ENCODE measurements at regions of chr15 and their contacts with region 1.

Region 1: DNA sequence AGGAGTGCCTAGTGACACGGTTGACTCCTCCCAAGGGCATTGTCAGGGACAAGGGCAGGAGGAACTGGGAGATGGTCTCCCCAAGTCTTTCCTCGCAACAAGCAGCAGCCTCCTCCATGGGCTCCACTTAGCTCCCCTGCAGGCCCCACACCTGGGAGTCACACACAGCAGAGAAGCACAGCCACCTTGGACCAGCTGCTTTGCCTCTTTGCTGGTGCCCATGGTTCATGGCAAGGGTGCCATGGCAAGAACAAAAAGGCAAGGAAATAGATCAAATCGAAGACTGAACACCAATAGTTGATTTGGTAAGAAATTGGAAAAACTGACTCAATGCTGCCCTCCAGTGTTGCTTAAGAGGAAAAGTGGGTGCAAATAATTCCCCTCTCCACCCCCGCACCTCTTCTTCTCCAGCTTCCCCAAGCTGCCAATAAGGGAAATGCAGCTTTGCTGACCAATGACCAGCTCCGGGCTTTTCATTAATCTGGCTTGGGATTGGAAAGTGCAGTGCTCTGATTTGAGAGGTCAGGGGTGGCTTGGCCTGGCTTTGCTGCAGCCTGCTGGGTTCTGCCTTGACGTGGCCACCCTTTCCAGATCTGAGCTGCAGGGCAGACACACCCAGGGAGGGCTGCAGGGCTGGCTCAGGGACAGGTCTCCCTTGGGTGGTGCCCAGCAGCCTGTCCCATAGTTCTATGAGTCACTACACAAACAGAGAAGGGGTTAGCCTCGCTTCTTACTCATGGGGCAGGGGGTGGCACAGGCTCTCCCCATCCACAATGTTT is 162.0 kb downstream of the KLF13 start:
- DNase-seq: peak in 1 of 2 donors; percentile 76
- ATAC-seq: peak; percentile 91
- H3K4me3 ChIP-seq: no peak overlapping the region
- H3K27ac ChIP-seq: peak overlapping the region; percentile 17 to 29
- H3K4me1 ChIP-seq: peaks cover 0 to 5% of the 10 kb centered on the region in 2 donors
- H3K27me3 ChIP-seq: no peaks in the 10 kb centered on the region

Region 2: GRCh38 chr15:30991255-30992072 is 497.2 kb before region 1 on chr15 and contains the start of gene MTMR10:
- intact Hi-C with region 1: loop called in 1 of 2 experiments (anchors 10 kb)
- DNase-seq: peak; percentile 83
- ATAC-seq: peak; percentile 97
- H3K4me3 ChIP-seq: peak within 1 kb of the TSS; percentile 86 to 90
- H3K27ac ChIP-seq: peak within 1 kb of the TSS; percentile 45 to 86
- H3K4me1 ChIP-seq: no peaks in the 10 kb centered on the region
- H3K27me3 ChIP-seq: no peaks in the 10 kb centered on the region
- total RNA-seq, gene MTMR10: 12.5 to 35.0 TPM

Region 3: DNA sequence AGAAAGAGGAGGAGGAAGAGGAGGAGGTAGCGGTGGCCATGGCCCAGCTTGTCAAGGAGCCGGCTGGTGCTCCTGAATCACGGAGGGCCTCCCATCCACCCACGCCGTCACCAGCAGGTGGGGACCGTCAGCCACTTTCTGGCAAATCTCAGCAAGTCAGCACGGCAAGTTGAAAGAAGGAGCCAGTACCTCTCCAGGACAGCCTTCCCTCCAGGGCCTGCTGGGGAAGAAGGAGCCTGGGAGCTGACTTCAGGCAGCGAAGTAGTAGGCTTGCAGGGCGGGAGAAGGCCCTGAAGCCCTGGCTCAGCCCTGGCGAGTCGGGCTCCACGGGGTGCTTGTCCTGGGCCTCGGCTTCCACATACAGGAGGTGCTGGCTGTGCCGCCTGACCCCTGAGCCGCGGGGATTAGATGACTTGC is 287.9 kb before region 1 on chr15:
- intact Hi-C with region 1: loop called in 1 of 2 experiments (anchors 5 kb)
- DNase-seq: peak; percentile 76 to 85
- ATAC-seq: peak; percentile 85
- H3K4me3 ChIP-seq: no peak overlapping the region
- H3K27ac ChIP-seq: no peak overlapping the region
- H3K4me1 ChIP-seq: no peaks in the 10 kb centered on the region
- H3K27me3 ChIP-seq: no peaks in the 10 kb centered on the region

Region 4: GRCh38 chr15:31215490-31216214 is 273.0 kb before region 1 on chr15:
- intact Hi-C with region 1: loop called in 1 of 2 experiments (anchors 5 kb)
- DNase-seq: peak; percentile 88
- ATAC-seq: peak; percentile 89
- H3K4me3 ChIP-seq: peak overlapping the region; percentile 18 to 77
- H3K27ac ChIP-seq: peak overlapping the region in 1 of 2 donors; percentile 15
- H3K4me1 ChIP-seq: peaks cover 0 to 3% of the 10 kb centered on the region in 2 donors
- H3K27me3 ChIP-seq: no peaks in the 10 kb centered on the region

Region 5: DNA sequence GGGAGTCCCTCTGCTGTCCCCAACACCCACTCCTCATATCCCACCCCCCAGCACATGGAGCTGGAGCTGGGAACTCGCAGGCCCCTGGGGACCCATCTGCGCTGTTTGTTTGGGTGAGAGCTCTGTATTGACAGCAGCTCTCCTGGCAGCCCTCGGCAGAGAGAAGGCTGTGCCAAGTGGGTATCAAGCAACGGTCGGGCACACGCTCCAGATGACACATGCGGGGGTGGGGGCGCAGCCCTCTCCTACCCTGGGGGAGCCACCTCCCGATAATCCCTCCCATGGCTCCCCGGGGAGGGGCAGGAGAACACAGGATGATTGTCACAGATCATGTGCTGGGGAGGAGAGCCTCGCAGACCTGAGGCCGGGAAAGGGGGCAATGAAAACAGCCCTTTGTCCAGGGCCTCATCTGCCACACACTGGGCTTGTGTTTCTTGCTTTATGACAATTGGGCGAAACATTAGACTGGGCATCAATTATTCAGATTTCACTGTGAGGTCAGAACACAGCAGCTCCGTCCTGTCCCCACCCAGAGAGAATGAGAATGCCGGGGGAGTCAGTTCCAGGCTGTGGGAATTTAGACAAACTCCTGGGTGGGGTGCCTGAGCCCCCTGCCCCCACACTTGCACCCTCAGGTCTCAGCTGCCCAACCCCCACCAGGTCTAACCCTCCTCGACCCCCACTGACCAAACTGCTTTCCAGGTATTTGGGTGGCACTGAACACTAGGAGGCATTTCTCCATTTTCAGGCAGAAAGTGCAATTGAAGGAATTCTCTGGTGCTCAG is 208.4 kb before region 1 on chr15:
- intact Hi-C with region 1: no loop called
- DNase-seq: peak in 1 of 2 donors; percentile 46
- ATAC-seq: peak; percentile 27
- H3K4me3 ChIP-seq: no peak overlapping the region
- H3K27ac ChIP-seq: no peak overlapping the region
- H3K4me1 ChIP-seq: no peaks in the 10 kb centered on the region
- H3K27me3 ChIP-seq: no peaks in the 10 kb centered on the region

Region 6: GRCh38 chr15:31365655-31366127 is 122.9 kb before region 1 on chr15:
- intact Hi-C with region 1: loop called in 1 of 2 experiments (anchors 2 kb)
- DNase-seq: peak; percentile 90 to 91
- ATAC-seq: peak; percentile 94
- H3K4me3 ChIP-seq: no peak overlapping the region
- H3K27ac ChIP-seq: peak overlapping the region in 1 of 2 donors; percentile 80
- H3K4me1 ChIP-seq: peaks cover 0 to 3% of the 10 kb centered on the region in 2 donors
- H3K27me3 ChIP-seq: no peaks in the 10 kb centered on the region

Region 7: GRCh38 chr15:31435261-31435911 is 53.2 kb before region 1 on chr15:
- intact Hi-C with region 1: loop called in 1 of 2 experiments (anchors 5 kb)
- DNase-seq: peak; percentile 81 to 85
- ATAC-seq: peak; percentile 87
- H3K4me3 ChIP-seq: no peak overlapping the region
- H3K27ac ChIP-seq: no peak overlapping the region
- H3K4me1 ChIP-seq: no peaks in the 10 kb centered on the region
- H3K27me3 ChIP-seq: no peaks in the 10 kb centered on the region